Endothelial cell of umbilical vein (primary cell): ENCODE measurements at regions of chr1 and their contacts with region 1.

Region 1: DNA sequence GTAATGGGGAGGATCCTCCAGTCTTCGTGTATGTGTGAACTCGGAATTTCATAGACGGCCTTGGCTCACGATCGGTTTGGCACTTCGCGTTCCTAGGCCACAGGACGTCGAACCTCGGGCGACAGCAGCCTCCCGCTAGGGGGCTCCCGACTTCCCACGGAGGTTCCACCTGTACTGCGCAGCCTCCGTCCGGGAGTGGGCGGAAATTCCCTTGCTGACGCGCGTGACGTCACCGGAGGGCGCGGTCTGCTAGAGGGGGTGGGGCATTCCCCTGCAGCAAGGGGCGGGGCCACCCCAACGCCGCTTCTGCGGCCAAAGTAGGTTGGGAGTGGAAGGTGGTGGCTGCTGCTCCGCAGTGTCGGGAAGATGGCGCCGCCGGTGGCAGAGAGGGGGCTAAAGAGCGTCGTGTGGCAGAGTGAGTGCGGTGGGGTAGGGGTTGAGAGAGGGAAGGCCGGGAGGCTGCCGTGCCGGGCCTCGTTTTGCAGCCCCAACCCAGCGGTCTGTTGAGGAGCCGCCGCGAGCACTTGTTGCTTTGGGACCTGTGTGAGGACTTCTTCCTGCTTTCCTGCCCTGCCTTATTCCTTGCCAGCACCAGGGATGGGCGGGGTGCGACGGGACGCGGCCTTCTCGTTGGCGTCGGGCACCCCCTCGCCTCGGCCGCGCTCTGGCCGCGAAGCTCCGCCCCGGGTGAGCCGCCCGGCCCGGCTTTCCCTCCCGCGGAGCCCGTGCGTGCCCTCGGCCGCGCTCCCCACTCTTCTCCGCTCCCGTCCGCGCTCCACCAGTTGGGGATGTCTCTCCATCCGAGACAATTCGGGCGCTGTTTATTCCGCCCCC is at the start of gene STXBP3:
- DNase-seq: peak; percentile 99
- H3K4me3 ChIP-seq: peak within 1 kb of the TSS; percentile 67 to 95 (median 93)
- H3K27ac ChIP-seq: peak within 1 kb of the TSS; percentile 89
- H3K4me1 ChIP-seq: peaks cover 15% of the 10 kb centered on the region
- H3K27me3 ChIP-seq: peaks cover 4 to 6% of the 10 kb centered on the region in 2 experiments
- CTCF ChIP-seq: peak; percentile 98 to 100
- POLR2A ChIP-seq: peak; percentile 97
- total RNA-seq, gene STXBP3: 37.2 and 44.1 TPM in 2 replicates

Region 2: DNA sequence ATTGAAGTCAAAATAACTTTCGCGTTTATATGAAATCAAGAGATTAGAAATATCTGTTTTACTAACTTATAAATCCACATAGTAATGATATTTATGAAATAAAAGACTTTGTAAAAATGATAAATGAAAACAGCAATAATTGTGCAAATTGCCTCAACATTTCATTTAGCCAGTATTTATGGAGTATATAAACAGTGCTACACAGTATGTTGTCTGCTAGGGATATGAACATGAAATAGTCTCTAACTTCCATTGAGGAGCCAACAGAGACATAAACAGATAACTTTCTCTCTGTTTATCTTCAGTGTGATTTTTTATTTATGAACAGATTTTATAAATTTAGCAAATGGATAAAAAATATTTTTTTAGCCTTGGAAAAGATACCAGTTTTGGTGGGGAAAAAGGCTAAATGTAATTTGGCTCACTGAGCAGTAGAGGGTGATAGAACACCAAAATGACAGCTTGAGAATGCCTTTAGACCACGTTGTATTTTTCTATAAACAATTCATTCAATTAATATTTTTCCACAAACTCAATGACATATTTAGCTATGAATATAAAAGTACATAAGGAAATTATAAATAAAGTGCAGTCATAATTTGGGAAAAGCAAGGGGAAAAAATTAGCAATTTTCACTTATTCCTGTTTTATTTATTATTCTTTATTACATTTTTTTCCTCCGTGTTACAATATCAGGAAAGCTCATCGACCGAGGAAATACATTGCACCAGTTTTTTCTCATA is 234.2 kb before region 1 on chr1:
- CTCF ChIA-PET with region 1: no interaction called
- POLR2A ChIA-PET with region 1: no interaction called
- dilution Hi-C with region 1: no loop called
- intact Hi-C with region 1: loop called (anchors 1 kb)
- DNase-seq: peak; percentile 39
- H3K4me3 ChIP-seq: no peak overlapping the region
- H3K27ac ChIP-seq: no peak overlapping the region
- H3K4me1 ChIP-seq: no peaks in the 10 kb centered on the region
- H3K27me3 ChIP-seq: peaks cover 2 to 9% of the 10 kb centered on the region in 2 experiments
- CTCF ChIP-seq: peak; percentile 43 to 53
- POLR2A ChIP-seq: no peak

Region 3: GRCh38 chr1:108590957-108591356 is 155.6 kb before region 1 on chr1:
- CTCF ChIA-PET with region 1: no interaction called
- POLR2A ChIA-PET with region 1: no interaction called
- dilution Hi-C with region 1: no loop called
- intact Hi-C with region 1: loop called (anchors 2 kb)
- DNase-seq: peak; percentile 97
- H3K4me3 ChIP-seq: peak overlapping the region in 1 of 3 experiments; percentile 31
- H3K27ac ChIP-seq: peak overlapping the region; percentile 94
- H3K4me1 ChIP-seq: peaks cover 39% of the 10 kb centered on the region
- H3K27me3 ChIP-seq: no peaks in the 10 kb centered on the region
- CTCF ChIP-seq: no peak
- POLR2A ChIP-seq: no peak

Region 4: GRCh38 chr1:108643492-108644335 is 102.9 kb before region 1 on chr1:
- CTCF ChIA-PET with region 1: no interaction called
- POLR2A ChIA-PET with region 1: no interaction called
- dilution Hi-C with region 1: no loop called
- intact Hi-C with region 1: no loop called
- DNase-seq: peak; percentile 78
- H3K4me3 ChIP-seq: no peak overlapping the region
- H3K27ac ChIP-seq: no peak overlapping the region
- H3K4me1 ChIP-seq: no peaks in the 10 kb centered on the region
- H3K27me3 ChIP-seq: no peaks in the 10 kb centered on the region
- CTCF ChIP-seq: peak; percentile 29 to 36
- POLR2A ChIP-seq: no peak

Region 5: GRCh38 chr1:108816049-108816893 is 69.7 kb after region 1 on chr1:
- CTCF ChIA-PET with region 1: no interaction called
- POLR2A ChIA-PET with region 1: no interaction called
- dilution Hi-C with region 1: no loop called
- intact Hi-C with region 1: loop called (anchors 1 kb)
- DNase-seq: peak; percentile 98
- H3K4me3 ChIP-seq: peak overlapping the region in 1 of 3 experiments; percentile 17
- H3K27ac ChIP-seq: peak overlapping the region; percentile 91
- H3K4me1 ChIP-seq: peaks cover 12% of the 10 kb centered on the region
- H3K27me3 ChIP-seq: no peaks in the 10 kb centered on the region
- CTCF ChIP-seq: no peak
- POLR2A ChIP-seq: peak; percentile 42

Region 6: GRCh38 chr1:108841703-108842102 is 95.1 kb after region 1 on chr1:
- CTCF ChIA-PET with region 1: no interaction called
- POLR2A ChIA-PET with region 1: no interaction called
- dilution Hi-C with region 1: no loop called
- intact Hi-C with region 1: no loop called
- DNase-seq: no peak
- H3K4me3 ChIP-seq: no peak overlapping the region
- H3K27ac ChIP-seq: no peak overlapping the region
- H3K4me1 ChIP-seq: no peaks in the 10 kb centered on the region
- H3K27me3 ChIP-seq: peaks cover 10 to 11% of the 10 kb centered on the region in 2 experiments
- CTCF ChIP-seq: no peak
- POLR2A ChIP-seq: no peak

Region 7: GRCh38 chr1:108877348-108878159 is 131.0 kb after region 1 on chr1:
- CTCF ChIA-PET with region 1: no interaction called
- POLR2A ChIA-PET with region 1: no interaction called
- dilution Hi-C with region 1: no loop called
- intact Hi-C with region 1: loop called (anchors 1 kb)
- DNase-seq: peak; percentile 55
- H3K4me3 ChIP-seq: peak overlapping the region; percentile 90 to 99 (median 93)
- H3K27ac ChIP-seq: peak overlapping the region; percentile 13
- H3K4me1 ChIP-seq: peaks cover 11% of the 10 kb centered on the region
- H3K27me3 ChIP-seq: no peaks in the 10 kb centered on the region
- CTCF ChIP-seq: no peak
- POLR2A ChIP-seq: no peak

Region 8: DNA sequence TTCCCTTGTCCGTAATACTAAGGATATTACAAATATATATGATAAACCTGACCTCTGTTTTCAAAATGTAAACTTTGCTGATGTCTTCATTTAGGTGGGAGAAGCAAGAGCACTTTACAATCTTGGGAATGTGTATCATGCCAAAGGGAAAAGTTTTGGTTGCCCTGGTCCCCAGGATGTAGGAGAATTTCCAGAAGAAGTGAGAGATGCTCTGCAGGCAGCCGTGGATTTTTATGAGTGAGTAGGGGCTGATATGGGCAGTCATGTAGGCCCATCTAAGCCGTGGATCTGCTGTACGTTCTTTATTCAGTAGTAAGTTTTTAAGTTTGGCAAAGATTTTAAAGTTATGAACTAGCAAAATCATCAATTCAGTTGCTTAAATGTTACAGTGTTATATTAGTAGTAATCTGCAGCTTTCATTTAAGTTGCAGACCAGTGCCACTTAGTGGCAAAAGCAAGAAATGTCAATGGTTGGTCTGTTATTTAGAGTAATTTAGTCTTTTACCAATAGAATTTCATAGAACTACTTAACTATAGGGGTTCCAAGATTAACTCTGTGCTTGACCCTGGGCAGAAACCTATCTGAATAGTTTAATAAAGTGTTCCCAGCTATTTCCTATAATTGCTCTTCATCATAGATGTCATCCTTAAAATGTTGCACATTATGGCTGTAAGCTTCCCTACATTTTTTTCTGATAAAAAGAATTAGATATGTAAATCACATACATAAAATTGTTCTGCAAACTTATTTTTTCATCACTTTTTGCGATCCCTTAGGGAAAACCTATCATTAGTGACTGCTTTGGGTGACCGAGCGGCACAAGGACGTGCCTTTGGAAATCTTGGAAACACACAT is 151.5 kb after region 1 on chr1:
- CTCF ChIA-PET with region 1: interaction called, 4 read pairs
- POLR2A ChIA-PET with region 1: no interaction called
- dilution Hi-C with region 1: no loop called
- intact Hi-C with region 1: loop called (anchors 1 kb)
- DNase-seq: peak; percentile 66
- H3K4me3 ChIP-seq: no peak overlapping the region
- H3K27ac ChIP-seq: no peak overlapping the region
- H3K4me1 ChIP-seq: peaks cover 4% of the 10 kb centered on the region
- H3K27me3 ChIP-seq: no peaks in the 10 kb centered on the region
- CTCF ChIP-seq: peak; percentile 36 to 45
- POLR2A ChIP-seq: no peak